G401 (cell line): ENCODE measurements at regions of chr17 and their contacts with region 1.

Region 1: DNA sequence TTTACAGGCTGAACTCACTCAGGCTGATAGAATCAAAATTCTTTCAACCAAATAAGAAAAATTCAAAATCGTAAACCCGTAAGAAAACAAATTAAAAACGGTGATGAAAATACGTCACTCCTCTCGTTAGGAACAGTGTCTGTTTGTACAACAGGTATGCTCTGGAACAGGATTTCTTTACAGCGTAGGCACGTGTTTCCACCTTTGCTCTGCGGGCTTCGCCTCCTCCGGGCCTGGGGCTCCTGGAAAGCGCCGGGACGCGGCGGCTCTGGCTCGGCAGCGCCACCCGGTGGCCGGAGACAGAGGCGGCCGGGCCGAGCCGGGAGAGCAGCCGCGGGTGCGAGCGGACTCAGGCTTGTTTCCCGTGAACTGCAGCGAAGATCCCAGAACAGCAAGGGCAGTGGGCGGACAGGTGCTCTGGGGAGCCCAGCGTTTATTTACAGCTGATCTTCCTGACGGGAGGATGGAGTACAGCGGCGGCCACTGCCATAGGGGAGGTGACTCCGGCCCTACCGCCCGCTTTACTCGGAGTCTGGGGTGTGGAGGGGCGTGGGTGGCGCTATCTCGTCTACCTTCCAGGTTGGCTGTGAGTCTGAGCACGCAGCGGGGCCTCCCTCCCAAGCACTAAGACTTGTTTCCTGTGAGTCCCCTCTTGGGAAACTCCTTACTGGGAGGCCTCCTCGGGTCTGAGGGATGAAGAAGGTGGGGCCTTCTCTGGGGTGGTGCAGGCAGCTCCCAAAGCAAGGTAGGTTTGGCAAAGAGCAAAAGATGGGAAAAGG is 40.5 kb upstream of the ATP2A3 start:
- DNase-seq: peak; percentile 39

Region 2: GRCh38 chr17:3870871-3871306 is 133.8 kb before region 1 on chr17:
- in situ Hi-C with region 1: loop called (anchors 25 kb)
- DNase-seq: no peak